HCT116 (cell line): ENCODE measurements at regions of chr3 and their contacts with region 1.

Region 1: DNA sequence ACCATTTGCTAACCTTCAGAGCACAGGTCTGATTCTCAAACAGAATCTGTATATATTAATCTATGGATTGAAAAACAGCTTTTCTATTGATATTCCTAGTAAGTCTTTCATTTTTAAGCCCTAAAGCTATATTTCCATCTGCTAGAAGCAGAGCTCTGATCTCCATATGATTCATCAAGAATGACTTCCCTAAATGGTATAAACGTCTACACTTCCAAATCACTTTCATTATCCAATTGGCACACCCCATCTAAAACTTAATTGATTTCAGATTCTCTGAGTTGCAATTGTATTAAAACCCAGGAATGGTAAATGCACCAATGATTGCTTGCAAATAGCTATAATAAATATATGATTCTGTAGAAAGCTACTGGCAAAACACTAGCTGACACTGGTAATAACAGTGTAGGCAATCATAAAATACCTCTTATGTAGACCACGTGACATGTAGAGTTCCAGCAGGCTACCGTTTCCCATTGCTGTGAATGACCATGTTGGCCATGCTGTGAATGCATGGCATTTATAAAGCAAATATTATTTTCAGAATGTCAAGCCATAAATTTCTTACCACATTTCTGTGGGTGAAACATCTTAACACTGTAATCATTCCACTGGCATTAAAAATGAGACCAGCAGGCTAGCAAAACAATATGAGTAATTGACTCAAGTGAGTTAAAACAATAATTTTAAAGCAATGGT is 226.0 kb downstream of the ZMAT3 start:
- DNase-seq: no peak
- ATAC-seq: no peak
- H3K4me3 ChIP-seq: no peak overlapping the region
- H3K27ac ChIP-seq: no peak overlapping the region
- H3K4me1 ChIP-seq: no peaks in the 10 kb centered on the region
- H3K27me3 ChIP-seq: no peaks in the 10 kb centered on the region
- CTCF ChIP-seq: no peak
- POLR2A ChIP-seq: no peak
- RAD21 ChIP-seq: no peak

Region 2: DNA sequence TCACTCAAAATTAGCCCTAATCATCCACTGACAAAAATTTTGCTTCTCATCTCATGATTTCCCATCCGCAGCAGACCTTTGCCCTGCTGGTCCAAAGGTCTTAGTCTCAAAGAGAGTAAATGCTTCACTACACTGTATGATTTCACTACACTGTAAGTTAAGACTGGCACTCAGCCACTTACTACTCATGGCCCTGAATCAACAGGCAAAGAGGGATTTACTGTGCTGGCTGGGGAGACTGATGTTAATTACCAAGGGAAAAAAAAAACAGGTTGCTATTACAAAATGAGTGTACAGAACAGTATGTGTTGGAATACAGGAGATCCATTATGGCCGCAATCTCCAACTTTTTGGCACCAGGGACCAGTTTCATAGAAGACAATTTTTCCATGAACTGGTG is 11.2 kb after region 1 on chr3:
- CTCF ChIA-PET with region 1: no interaction called
- POLR2A ChIA-PET with region 1: no interaction called
- RAD21 ChIA-PET with region 1: no interaction called
- intact Hi-C with region 1: no loop called
- DNase-seq: no peak
- ATAC-seq: no peak
- H3K4me3 ChIP-seq: no peak overlapping the region
- H3K27ac ChIP-seq: no peak overlapping the region
- H3K4me1 ChIP-seq: peaks cover 0 to 7% of the 10 kb centered on the region in 2 experiments; a peak in 1 of 4 replicates
- H3K27me3 ChIP-seq: no peaks in the 10 kb centered on the region
- CTCF ChIP-seq: no peak
- POLR2A ChIP-seq: no peak
- RAD21 ChIP-seq: no peak

Region 3: GRCh38 chr3:178900029-178900646 is 54.6 kb after region 1 on chr3:
- CTCF ChIA-PET with region 1: no interaction called
- POLR2A ChIA-PET with region 1: no interaction called
- RAD21 ChIA-PET with region 1: no interaction called
- intact Hi-C with region 1: loop called (anchors 2 kb)
- DNase-seq: no peak
- ATAC-seq: no peak
- H3K4me3 ChIP-seq: no peak overlapping the region
- H3K27ac ChIP-seq: no peak overlapping the region
- H3K4me1 ChIP-seq: no peaks in the 10 kb centered on the region
- H3K27me3 ChIP-seq: no peaks in the 10 kb centered on the region
- CTCF ChIP-seq: no peak
- POLR2A ChIP-seq: no peak
- RAD21 ChIP-seq: no peak